ENCODE measurements at regions of chr16 and their contacts with region 1.

Region 1: GRCh38 chr16:73068541-73069401 is 20.8 kb upstream of the ZFHX3 start:
- DNase-seq: peak; percentile 96

Region 2: GRCh38 chr16:73047518-73048291 is 21.1 kb before region 1 on chr16 and contains the start of gene ZFHX3:
- intact Hi-C with region 1: no loop called
- DNase-seq: peak; percentile 93
- total RNA-seq, gene ZFHX3: 40.8 to 43.7 TPM

Region 3: GRCh38 chr16:73172241-73172972 is 103.6 kb after region 1 on chr16:
- intact Hi-C with region 1: loop called (anchors 5 to 10 kb)
- DNase-seq: peak; percentile 89